Calu3 (cell line): ENCODE measurements at regions of chr12 and their contacts with region 1.

Region 1: GRCh38 chr12:65602610-65603295 is 221.5 kb upstream of the HMGA2 start:
- DNase-seq: peak; percentile 93
- H3K4me3 Mint-ChIP-seq: peak overlapping the region; percentile 68
- H3K27ac Mint-ChIP-seq: peak overlapping the region; percentile 95
- H3K4me1 Mint-ChIP-seq: peaks cover 78% of the 10 kb centered on the region
- H3K27me3 Mint-ChIP-seq: no peaks in the 10 kb centered on the region
- CTCF ChIP-seq: peak; percentile 77

Region 2: GRCh38 chr12:65074932-65075331 is 527.8 kb before region 1 on chr12:
- CTCF ChIA-PET with region 1: no interaction called
- intact Hi-C with region 1: no loop called
- DNase-seq: no peak
- H3K4me3 Mint-ChIP-seq: no peak overlapping the region
- H3K27ac Mint-ChIP-seq: no peak overlapping the region
- H3K4me1 Mint-ChIP-seq: no peaks in the 10 kb centered on the region
- H3K27me3 Mint-ChIP-seq: no peaks in the 10 kb centered on the region
- CTCF ChIP-seq: no peak

Region 3: DNA sequence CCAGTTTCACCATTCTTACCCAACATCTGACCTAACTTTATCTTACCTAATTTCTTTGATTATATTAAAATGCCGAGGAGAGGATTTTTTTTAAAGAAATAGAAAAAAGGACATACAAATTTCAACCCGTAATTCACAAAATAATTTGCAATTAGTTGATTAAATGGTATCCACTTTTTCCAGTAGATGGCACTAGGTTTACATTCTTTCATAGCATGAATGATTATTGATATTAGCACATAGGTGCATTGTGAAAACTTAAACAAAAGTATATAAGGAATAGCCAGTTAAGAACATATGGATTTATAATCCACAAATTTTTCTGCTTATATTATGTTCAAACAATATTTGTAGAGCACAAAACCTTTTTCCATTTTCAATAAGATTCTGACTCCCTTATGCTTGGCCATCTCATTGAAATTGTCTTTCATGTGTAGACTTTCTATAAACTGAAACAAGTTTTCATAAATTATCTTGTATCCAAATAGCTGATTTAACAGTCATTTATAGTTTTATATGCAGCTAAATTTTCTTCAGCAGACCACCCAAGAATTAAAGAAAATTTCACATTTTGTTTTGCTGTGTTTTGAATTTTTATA is 288.9 kb before region 1 on chr12:
- CTCF ChIA-PET with region 1: interaction called, 3 read pairs
- intact Hi-C with region 1: loop called (anchors 2 kb)
- DNase-seq: no peak
- H3K4me3 Mint-ChIP-seq: no peak overlapping the region
- H3K27ac Mint-ChIP-seq: no peak overlapping the region
- H3K4me1 Mint-ChIP-seq: peaks cover 6% of the 10 kb centered on the region
- H3K27me3 Mint-ChIP-seq: no peaks in the 10 kb centered on the region
- CTCF ChIP-seq: peak; percentile 43

Region 4: GRCh38 chr12:65631621-65632111 is 28.9 kb after region 1 on chr12:
- CTCF ChIA-PET with region 1: interaction called, 12 read pairs
- intact Hi-C with region 1: loop called (anchors 2 kb)
- DNase-seq: peak; percentile 72
- H3K4me3 Mint-ChIP-seq: peak overlapping the region; percentile 31
- H3K27ac Mint-ChIP-seq: peak overlapping the region; percentile 90
- H3K4me1 Mint-ChIP-seq: peaks cover 67% of the 10 kb centered on the region
- H3K27me3 Mint-ChIP-seq: no peaks in the 10 kb centered on the region
- CTCF ChIP-seq: no peak

Region 5: DNA sequence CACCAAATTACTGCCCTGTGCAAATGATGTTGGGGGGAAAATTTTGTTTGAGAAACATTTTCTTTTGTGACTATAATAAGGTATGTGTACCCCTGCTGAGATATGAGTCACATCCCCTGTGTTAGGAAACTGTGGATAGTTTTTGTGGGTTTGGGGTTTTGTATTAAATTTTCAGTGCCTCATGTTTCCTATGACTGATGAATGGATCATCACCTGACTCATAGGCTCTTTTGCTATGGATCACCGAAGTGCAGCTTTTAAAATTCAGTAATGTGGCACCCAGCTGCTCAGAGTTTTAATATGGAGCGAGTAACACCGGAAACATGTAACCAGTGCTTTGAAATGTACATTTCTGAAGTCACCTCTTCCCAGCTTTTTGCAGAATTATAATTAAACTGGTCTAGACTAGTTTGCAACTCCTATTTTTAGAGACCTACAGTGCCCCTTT is 54.2 kb after region 1 on chr12:
- CTCF ChIA-PET with region 1: interaction called, 10 read pairs
- intact Hi-C with region 1: no loop called
- DNase-seq: peak; percentile 32
- H3K4me3 Mint-ChIP-seq: no peak overlapping the region
- H3K27ac Mint-ChIP-seq: peak overlapping the region; percentile 67
- H3K4me1 Mint-ChIP-seq: peaks cover 77% of the 10 kb centered on the region
- H3K27me3 Mint-ChIP-seq: no peaks in the 10 kb centered on the region
- CTCF ChIP-seq: no peak

Region 6: DNA sequence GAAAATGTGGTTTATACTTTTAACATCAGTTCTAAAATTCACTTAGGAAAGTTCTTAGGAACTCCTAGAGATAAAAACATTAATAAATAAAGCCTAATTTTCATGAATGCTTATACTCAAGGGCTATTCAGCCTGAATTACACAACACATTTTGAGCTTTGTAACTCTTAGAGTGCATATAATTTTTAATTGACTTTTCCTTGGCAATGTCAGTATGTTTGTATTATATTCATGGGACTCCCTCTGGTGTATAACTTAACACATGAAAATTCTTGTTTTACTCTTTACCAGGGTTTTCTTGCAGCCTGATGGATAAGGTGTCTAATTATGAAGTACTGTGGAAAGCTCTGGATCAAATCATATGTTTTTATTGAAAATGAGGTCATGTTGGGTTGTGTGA is 71.0 kb after region 1 on chr12:
- CTCF ChIA-PET with region 1: interaction called, 36 read pairs
- intact Hi-C with region 1: no loop called
- DNase-seq: no peak
- H3K4me3 Mint-ChIP-seq: no peak overlapping the region
- H3K27ac Mint-ChIP-seq: peak overlapping the region; percentile 85
- H3K4me1 Mint-ChIP-seq: peaks cover 38% of the 10 kb centered on the region
- H3K27me3 Mint-ChIP-seq: no peaks in the 10 kb centered on the region
- CTCF ChIP-seq: no peak

Region 7: DNA sequence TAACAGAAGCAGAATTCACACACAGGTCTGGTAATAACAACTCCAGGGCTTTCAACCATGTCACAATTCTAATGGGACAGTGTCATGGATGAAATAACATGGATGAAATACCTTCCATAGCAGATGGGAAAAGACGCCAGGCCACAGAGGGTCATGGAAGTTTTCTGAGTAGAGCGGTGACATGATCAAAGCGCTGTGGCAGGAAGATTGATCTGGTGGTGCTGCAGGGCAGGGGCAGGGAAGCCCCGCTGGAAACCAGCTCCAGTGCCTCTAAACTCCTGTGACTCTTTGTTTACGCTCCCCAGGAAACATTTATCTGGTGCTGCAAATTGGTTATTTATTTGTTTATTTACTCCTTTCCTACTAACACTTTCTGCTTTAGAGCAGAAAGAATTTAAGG is 113.2 kb after region 1 on chr12:
- CTCF ChIA-PET with region 1: no interaction called
- intact Hi-C with region 1: no loop called
- DNase-seq: no peak
- H3K4me3 Mint-ChIP-seq: no peak overlapping the region
- H3K27ac Mint-ChIP-seq: no peak overlapping the region
- H3K4me1 Mint-ChIP-seq: no peaks in the 10 kb centered on the region
- H3K27me3 Mint-ChIP-seq: no peaks in the 10 kb centered on the region
- CTCF ChIP-seq: no peak

Region 8: DNA sequence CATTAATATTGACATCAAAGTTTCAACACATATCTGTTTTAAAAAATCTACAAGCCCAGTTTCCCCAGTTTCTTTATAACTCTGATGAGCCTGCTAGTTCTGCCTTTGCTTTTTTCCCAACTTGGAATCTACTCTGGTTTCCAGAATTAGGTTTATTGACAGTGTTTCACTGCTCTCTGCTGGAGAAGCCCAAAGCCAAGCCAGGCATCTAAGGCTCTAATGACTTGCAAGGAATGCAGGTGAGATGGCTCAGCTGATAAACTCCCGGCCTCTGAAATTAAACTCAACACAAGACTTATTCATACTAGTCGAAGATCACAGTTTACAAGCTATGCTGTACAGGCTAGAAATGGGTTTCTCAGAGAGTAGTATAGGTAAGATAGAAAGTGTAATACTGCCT is 275.8 kb after region 1 on chr12:
- CTCF ChIA-PET with region 1: interaction called, 6 read pairs
- intact Hi-C with region 1: loop called (anchors 5 kb)
- DNase-seq: peak; percentile 46
- H3K4me3 Mint-ChIP-seq: no peak overlapping the region
- H3K27ac Mint-ChIP-seq: no peak overlapping the region
- H3K4me1 Mint-ChIP-seq: peaks cover 41% of the 10 kb centered on the region
- H3K27me3 Mint-ChIP-seq: no peaks in the 10 kb centered on the region
- CTCF ChIP-seq: no peak